Activated CD4-positive, alpha-beta T cell treated with anti-CD3 and anti-CD28 coated beads, Interleukin-2, amount 10 ng/mL, durations not matched to agents 24 days and 14 days (primary cell): ENCODE measurements at regions of chr5 and their contacts with region 1.

Region 1: GRCh38 chr5:67059744-67060490 is 136.7 kb downstream of the CD180 start:
- DNase-seq: peak; percentile 25
- H3K4me3 Mint-ChIP-seq: no peak overlapping the region
- H3K27ac Mint-ChIP-seq: no peak overlapping the region
- H3K4me1 Mint-ChIP-seq: peaks cover 9% of the 10 kb centered on the region
- H3K27me3 Mint-ChIP-seq: no peaks in the 10 kb centered on the region

Region 2: DNA sequence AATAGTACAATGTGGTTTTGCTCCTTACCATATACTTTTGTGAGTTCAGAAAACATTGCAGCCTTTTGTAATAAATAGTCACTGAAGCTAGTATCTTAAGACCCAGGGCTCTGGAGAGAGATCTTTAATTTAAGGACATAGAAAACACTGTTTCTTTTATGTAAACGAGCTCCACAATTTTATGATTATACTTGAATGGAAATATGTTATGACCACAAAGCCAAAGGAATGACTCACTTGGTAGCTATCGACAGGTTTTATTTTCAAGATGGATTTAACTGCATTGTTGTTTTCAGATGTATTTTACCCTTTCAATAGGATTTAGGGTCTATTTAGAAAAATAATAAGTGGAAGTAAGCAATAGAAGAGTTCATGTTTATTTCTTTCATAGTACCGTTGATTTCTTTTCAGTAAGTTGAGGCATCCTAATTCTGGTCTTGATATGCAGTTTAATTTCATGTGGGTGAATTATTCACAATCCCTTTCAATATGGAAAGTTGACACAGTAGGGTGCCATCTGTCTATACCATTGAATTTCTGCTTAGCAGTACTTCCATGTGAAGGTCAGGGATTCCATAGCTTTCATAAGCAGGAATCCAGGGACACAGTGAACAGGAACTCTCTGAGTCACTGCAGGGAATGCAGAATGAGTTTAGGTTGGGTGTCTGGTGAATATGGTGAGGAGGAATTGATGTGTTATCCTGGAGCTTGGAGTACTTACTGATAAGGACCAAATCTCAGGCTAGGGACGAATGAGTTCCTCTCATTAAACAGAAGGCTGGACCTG is 20.9 kb before region 1 on chr5:
- intact Hi-C with region 1: no loop called
- DNase-seq: no peak
- H3K4me3 Mint-ChIP-seq: no peak overlapping the region
- H3K27ac Mint-ChIP-seq: peak overlapping the region; percentile 54
- H3K4me1 Mint-ChIP-seq: peaks cover 30% of the 10 kb centered on the region
- H3K27me3 Mint-ChIP-seq: no peaks in the 10 kb centered on the region

Region 3: GRCh38 chr5:67100301-67100700 is 40.4 kb after region 1 on chr5:
- intact Hi-C with region 1: loop called (anchors 5 kb)
- DNase-seq: peak; percentile 55
- H3K4me3 Mint-ChIP-seq: no peak overlapping the region
- H3K27ac Mint-ChIP-seq: peak overlapping the region; percentile 25
- H3K4me1 Mint-ChIP-seq: peaks cover 4% of the 10 kb centered on the region
- H3K27me3 Mint-ChIP-seq: no peaks in the 10 kb centered on the region